MCF 10A (cell line): ENCODE measurements at regions of chr1 and their contacts with region 1.

Region 1: GRCh38 chr1:100606438-100606837 is 68.5 kb downstream of the GPR88 start:
- DNase-seq: peak; percentile 61
- H3K4me3 Mint-ChIP-seq: no peak overlapping the region
- H3K27ac Mint-ChIP-seq: no peak overlapping the region
- H3K4me1 Mint-ChIP-seq: no peaks in the 10 kb centered on the region
- H3K27me3 Mint-ChIP-seq: no peaks in the 10 kb centered on the region
- CTCF ChIP-seq: peak; percentile 65

Region 2: GRCh38 chr1:100622037-100622436 is 15.6 kb after region 1 on chr1:
- CTCF ChIA-PET with region 1: interaction called, 18 read pairs
- POLR2A ChIA-PET with region 1: no interaction called
- intact Hi-C with region 1: no loop called
- DNase-seq: peak; percentile 97
- H3K4me3 Mint-ChIP-seq: no peak overlapping the region
- H3K27ac Mint-ChIP-seq: peak overlapping the region; percentile 29
- H3K4me1 Mint-ChIP-seq: peaks cover 30% of the 10 kb centered on the region
- H3K27me3 Mint-ChIP-seq: no peaks in the 10 kb centered on the region
- CTCF ChIP-seq: no peak